A673 (cell line): ENCODE measurements at regions of chr2 and their contacts with region 1.

Region 1: DNA sequence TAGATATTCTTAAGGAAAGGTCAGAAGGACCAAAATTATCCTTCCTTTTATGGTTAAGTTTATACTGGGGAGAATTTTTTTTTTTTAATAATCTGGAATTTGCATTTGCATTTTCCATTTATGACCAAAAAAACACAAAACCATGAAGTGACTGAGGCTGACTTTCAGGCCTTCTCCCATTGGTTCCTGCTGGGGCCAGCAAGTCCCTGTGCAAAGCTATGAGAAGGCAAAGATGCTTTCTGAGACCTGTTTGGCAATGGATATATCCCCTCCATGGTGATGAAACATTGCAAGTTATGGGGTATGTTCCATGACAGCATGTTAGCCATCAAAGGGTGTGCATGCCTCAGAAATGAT is 60.8 kb downstream of the KIAA2012 start:
- DNase-seq: no peak
- H3K4me3 ChIP-seq: no peak overlapping the region
- H3K27ac ChIP-seq: no peak overlapping the region
- H3K4me1 ChIP-seq: no peaks in the 10 kb centered on the region
- H3K27me3 ChIP-seq: no peaks in the 10 kb centered on the region
- CTCF ChIP-seq: no peak

Region 2: GRCh38 chr2:200939832-200940231 is 1194.1 kb before region 1 on chr2:
- CTCF ChIA-PET with region 1: no interaction called
- POLR2A ChIA-PET with region 1: no interaction called
- intact Hi-C with region 1: no loop called
- DNase-seq: no peak
- H3K4me3 ChIP-seq: no peak overlapping the region
- H3K27ac ChIP-seq: no peak overlapping the region
- H3K4me1 ChIP-seq: no peaks in the 10 kb centered on the region
- H3K27me3 ChIP-seq: no peaks in the 10 kb centered on the region
- CTCF ChIP-seq: no peak

Region 3: GRCh38 chr2:200975672-200976071 is 1158.2 kb before region 1 on chr2:
- CTCF ChIA-PET with region 1: no interaction called
- POLR2A ChIA-PET with region 1: interaction called, 13 read pairs
- intact Hi-C with region 1: no loop called
- DNase-seq: no peak
- H3K4me3 ChIP-seq: no peak overlapping the region
- H3K27ac ChIP-seq: no peak overlapping the region
- H3K4me1 ChIP-seq: no peaks in the 10 kb centered on the region
- H3K27me3 ChIP-seq: no peaks in the 10 kb centered on the region
- CTCF ChIP-seq: no peak